ENCODE measurements at regions of chr10 and their contacts with region 1.

Region 1: GRCh38 chr10:28089467-28089866 is 90.6 kb upstream of the ODAD2 start:
- DNase-seq: no peak
- H3K4me3 ChIP-seq: no peak overlapping the region
- H3K27me3 ChIP-seq: no peaks in the 10 kb centered on the region
- CTCF ChIP-seq: no peak

Region 2: GRCh38 chr10:28060031-28060607 is 29.3 kb before region 1 on chr10:
- CTCF ChIA-PET with region 1: no interaction called
- POLR2A ChIA-PET with region 1: interaction called, 11 read pairs
- DNase-seq: no peak
- H3K4me3 ChIP-seq: no peak overlapping the region
- H3K27me3 ChIP-seq: no peaks in the 10 kb centered on the region
- CTCF ChIP-seq: no peak

Region 3: GRCh38 chr10:28111712-28112111 is 22.2 kb after region 1 on chr10:
- CTCF ChIA-PET with region 1: no interaction called
- POLR2A ChIA-PET with region 1: no interaction called
- DNase-seq: no peak
- H3K4me3 ChIP-seq: no peak overlapping the region
- H3K27me3 ChIP-seq: no peaks in the 10 kb centered on the region
- CTCF ChIP-seq: no peak